HepG2 (cell line): ENCODE measurements at regions of chr11 and their contacts with region 1.

Region 1: DNA sequence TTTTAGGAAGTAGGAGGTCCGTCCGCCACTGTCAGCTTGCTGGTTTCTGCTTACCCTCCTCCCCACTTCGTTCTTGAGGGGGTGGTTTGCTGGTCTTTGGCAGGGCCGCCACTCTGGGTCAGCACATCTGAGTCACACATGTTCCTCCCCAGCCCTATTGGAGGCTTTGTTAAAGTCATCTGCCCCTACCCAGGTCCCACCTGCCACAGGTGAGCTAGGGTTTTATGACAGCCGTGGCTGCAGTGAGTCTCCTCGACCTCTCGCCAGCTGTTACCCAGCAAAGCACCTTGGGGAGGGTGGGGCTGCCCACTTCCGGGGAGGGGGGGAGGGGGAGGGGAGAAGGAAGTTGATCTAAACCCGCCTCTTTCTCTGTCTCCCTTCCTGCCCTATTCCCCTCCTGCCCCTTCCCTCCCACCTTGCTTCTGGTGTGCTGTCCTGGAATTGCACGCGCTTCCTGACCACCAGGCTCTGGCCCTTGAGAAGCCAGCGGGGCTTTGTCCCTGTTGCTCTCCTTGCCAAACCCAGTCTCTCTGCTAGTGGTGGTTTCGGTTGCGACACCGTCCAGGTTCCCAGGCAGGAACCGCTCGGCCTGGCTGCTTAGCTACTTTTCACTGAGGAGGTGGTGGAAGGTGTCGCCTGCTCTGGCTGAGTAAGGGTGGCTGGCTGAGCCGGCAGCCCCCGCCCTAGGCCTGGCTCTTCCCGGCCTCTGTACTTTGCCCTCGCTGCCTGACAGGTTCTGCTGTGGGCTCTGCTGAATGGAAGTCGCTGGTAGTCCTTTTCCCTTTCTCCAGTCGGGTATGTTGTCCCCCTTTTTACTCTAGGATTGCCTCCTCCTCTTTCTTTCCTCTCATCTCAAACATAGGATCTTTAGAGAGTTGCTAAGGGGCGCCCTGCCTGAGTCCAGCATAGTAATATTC is 28.5 kb downstream of the RCOR2 start:
- DNase-seq: peak; percentile 81
- ATAC-seq: peak; percentile 93
- H3K4me3 ChIP-seq: peak overlapping the region; percentile 46 to 79 (median 53)
- H3K27ac ChIP-seq: peak overlapping the region; percentile 92
- H3K4me1 ChIP-seq: peaks cover 41% of the 10 kb centered on the region
- H3K27me3 ChIP-seq: no peaks in the 10 kb centered on the region
- CTCF ChIP-seq: peak; percentile 26
- EP300 ChIP-seq: no peak
- POLR2A ChIP-seq: peak; percentile 71 to 87
- RAD21 ChIP-seq: peak; percentile 60; the same call in 1 of the 2 replicates

Region 2: DNA sequence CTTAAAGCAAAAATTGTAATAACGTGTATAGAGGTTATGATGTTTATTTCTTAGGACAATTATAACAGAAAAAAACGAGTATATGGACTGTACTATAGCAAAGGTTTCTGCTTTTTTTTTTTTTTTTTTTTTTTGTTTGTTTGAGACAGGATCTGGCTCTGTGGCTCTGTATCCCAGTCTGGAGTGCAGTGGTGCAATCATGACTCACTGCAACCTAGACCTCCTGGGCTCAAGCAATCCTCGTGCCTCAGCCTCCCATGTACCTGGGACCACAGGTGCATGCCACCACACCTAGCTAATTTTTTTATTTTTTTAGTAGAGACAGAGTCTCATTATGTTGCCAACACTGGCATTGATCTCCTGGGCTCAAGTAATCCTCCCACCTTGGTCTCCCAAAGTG is 159.1 kb before region 1 on chr11:
- CTCF ChIA-PET with region 1: no interaction called
- POLR2A ChIA-PET with region 1: no interaction called
- in situ Hi-C with region 1: no loop called
- intact Hi-C with region 1: no loop called
- DNase-seq: no peak
- ATAC-seq: no peak
- H3K4me3 ChIP-seq: no peak overlapping the region
- H3K27ac ChIP-seq: no peak overlapping the region
- H3K4me1 ChIP-seq: peaks cover 8% of the 10 kb centered on the region; the same call in 1 of the 2 replicates
- H3K27me3 ChIP-seq: no peaks in the 10 kb centered on the region
- CTCF ChIP-seq: no peak
- EP300 ChIP-seq: no peak
- POLR2A ChIP-seq: no peak
- RAD21 ChIP-seq: no peak

Region 3: GRCh38 chr11:63871962-63872799 is 16.2 kb before region 1 on chr11:
- CTCF ChIA-PET with region 1: no interaction called
- POLR2A ChIA-PET with region 1: interaction called, 11 read pairs
- in situ Hi-C with region 1: no loop called
- intact Hi-C with region 1: no loop called
- DNase-seq: peak; percentile 96
- ATAC-seq: peak; percentile 99
- H3K4me3 ChIP-seq: peak overlapping the region in 1 of 3 experiments; percentile 35; a peak in 2 of 6 replicates
- H3K27ac ChIP-seq: peak overlapping the region; percentile 64
- H3K4me1 ChIP-seq: peaks cover 26% of the 10 kb centered on the region
- H3K27me3 ChIP-seq: no peaks in the 10 kb centered on the region
- CTCF ChIP-seq: peak; percentile 95
- EP300 ChIP-seq: peak in 1 of 2 experiments; percentile 38; a peak in 1 of 4 replicates
- POLR2A ChIP-seq: no peak
- RAD21 ChIP-seq: peak; percentile 91

Region 4: GRCh38 chr11:63877658-63878241 is 10.7 kb before region 1 on chr11:
- CTCF ChIA-PET with region 1: no interaction called
- POLR2A ChIA-PET with region 1: interaction called, 11 read pairs
- in situ Hi-C with region 1: no loop called
- intact Hi-C with region 1: no loop called
- DNase-seq: no peak
- ATAC-seq: no peak
- H3K4me3 ChIP-seq: no peak overlapping the region
- H3K27ac ChIP-seq: no peak overlapping the region
- H3K4me1 ChIP-seq: peaks cover 15% of the 10 kb centered on the region
- H3K27me3 ChIP-seq: no peaks in the 10 kb centered on the region
- CTCF ChIP-seq: no peak
- EP300 ChIP-seq: no peak
- POLR2A ChIP-seq: no peak
- RAD21 ChIP-seq: no peak